Activated CD4-positive, alpha-beta memory T cell treated with anti-CD3 and anti-CD28 coated beads, Interleukin-2, amount 10 ng/mL, durations not matched to agents 7 days and 5 days (primary cell): ENCODE measurements at regions of chr3 and their contacts with region 1.

Region 1: GRCh38 chr3:9302425-9303181 is 53.2 kb upstream of the SRGAP3 start:
- DNase-seq: peak; percentile 77
- H3K4me3 Mint-ChIP-seq: peak overlapping the region; percentile 19
- H3K27ac Mint-ChIP-seq: no peak overlapping the region
- H3K4me1 Mint-ChIP-seq: peaks cover 7% of the 10 kb centered on the region
- H3K27me3 Mint-ChIP-seq: peaks cover 16% of the 10 kb centered on the region

Region 2: GRCh38 chr3:8970971-8971589 is 331.5 kb before region 1 on chr3:
- CTCF ChIA-PET with region 1: interaction called, 102 read pairs
- POLR2A ChIA-PET with region 1: no interaction called
- DNase-seq: peak; percentile 75
- H3K4me3 Mint-ChIP-seq: no peak overlapping the region
- H3K27ac Mint-ChIP-seq: no peak overlapping the region
- H3K4me1 Mint-ChIP-seq: peaks cover 3% of the 10 kb centered on the region
- H3K27me3 Mint-ChIP-seq: peaks cover 8% of the 10 kb centered on the region

Region 3: GRCh38 chr3:9224490-9224889 is 78.1 kb before region 1 on chr3:
- CTCF ChIA-PET with region 1: interaction called, 10 read pairs
- POLR2A ChIA-PET with region 1: no interaction called
- DNase-seq: peak; percentile 22
- H3K4me3 Mint-ChIP-seq: no peak overlapping the region
- H3K27ac Mint-ChIP-seq: no peak overlapping the region
- H3K4me1 Mint-ChIP-seq: peaks cover 17% of the 10 kb centered on the region
- H3K27me3 Mint-ChIP-seq: peaks cover 43% of the 10 kb centered on the region